CD8-positive, alpha-beta memory T cell (primary cell): ENCODE measurements at regions of chr13 and their contacts with region 1.

Region 1: DNA sequence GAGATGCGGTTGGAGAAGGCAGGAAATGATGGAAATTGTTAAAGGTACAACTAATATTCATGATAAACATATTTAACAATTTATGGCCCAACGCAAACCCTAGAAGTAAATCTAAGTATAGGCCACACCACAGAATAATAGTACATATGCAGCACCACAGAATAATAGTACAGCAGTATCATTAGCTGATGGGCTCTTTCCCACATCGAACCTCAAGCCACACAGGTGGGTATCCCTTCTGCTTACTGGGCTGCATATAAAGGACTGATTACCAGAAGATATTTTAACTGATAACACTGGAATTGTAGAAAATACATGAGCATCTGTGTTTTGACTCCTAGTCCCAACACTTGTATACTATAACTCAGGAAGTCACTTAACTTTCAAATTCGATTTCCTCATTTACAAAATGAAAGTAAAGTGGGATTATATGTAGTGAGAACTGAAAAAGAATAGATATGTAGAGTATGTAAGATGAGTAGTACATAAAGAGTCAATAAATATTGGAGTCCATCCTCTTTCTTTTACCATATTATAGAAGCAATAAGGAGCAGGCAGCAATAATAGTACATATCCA is 91.5 kb downstream of the TSC22D1 start:
- DNase-seq: no peak
- H3K4me3 ChIP-seq: peak overlapping the region; percentile 2
- H3K4me3 Mint-ChIP-seq: peak overlapping the region; percentile 11 to 69 (median 46)
- H3K27ac ChIP-seq: no peak overlapping the region
- H3K27ac Mint-ChIP-seq: peak overlapping the region in 7 of 8 donors; percentile 20 to 80 (median 61)
- H3K4me1 ChIP-seq: peaks cover 13% of the 10 kb centered on the region
- H3K4me1 Mint-ChIP-seq: peaks cover 18 to 24% (median 20%) of the 10 kb centered on the region in 3 donors
- H3K27me3 ChIP-seq: no peaks in the 10 kb centered on the region
- H3K27me3 Mint-ChIP-seq: no peaks in the 10 kb centered on the region

Region 2: DNA sequence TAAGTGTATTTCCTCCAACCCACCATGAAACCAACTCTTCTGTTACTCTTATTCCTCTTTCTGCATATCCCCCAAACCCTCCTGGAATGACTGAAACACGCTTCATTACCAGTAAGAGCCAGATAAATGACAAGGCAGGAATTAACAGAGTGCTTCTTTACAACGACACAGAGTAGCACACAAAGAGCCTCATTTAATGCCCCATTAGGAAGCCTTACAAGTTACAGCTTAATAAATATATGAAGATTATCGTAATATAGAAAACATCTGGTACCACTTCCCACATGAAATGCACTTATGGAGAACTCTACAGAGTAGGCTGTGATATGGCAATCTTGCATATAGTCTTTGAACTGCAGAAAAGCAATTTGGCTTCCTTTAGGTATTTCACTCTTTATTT is 814.7 kb before region 1 on chr13:
- CTCF ChIA-PET with region 1: no interaction called
- POLR2A ChIA-PET with region 1: no interaction called
- DNase-seq: no peak
- H3K4me3 ChIP-seq: no peak overlapping the region
- H3K4me3 Mint-ChIP-seq: no peak overlapping the region
- H3K27ac ChIP-seq: no peak overlapping the region
- H3K27ac Mint-ChIP-seq: no peak overlapping the region
- H3K4me1 ChIP-seq: no peaks in the 10 kb centered on the region
- H3K4me1 Mint-ChIP-seq: peaks cover 1 to 4% (median 4%) of the 10 kb centered on the region in 3 donors
- H3K27me3 ChIP-seq: peaks cover 4% of the 10 kb centered on the region
- H3K27me3 Mint-ChIP-seq: peaks cover 6 to 11% of the 10 kb centered on the region in 2 donors

Region 3: GRCh38 chr13:44648392-44649103 is 163.9 kb after region 1 on chr13:
- CTCF ChIA-PET with region 1: interaction called, 12 read pairs
- POLR2A ChIA-PET with region 1: no interaction called
- DNase-seq: no peak
- H3K4me3 ChIP-seq: no peak overlapping the region
- H3K4me3 Mint-ChIP-seq: peak overlapping the region in 1 of 7 donors; percentile 48
- H3K27ac ChIP-seq: no peak overlapping the region
- H3K27ac Mint-ChIP-seq: peak overlapping the region in 1 of 8 donors; percentile 36
- H3K4me1 ChIP-seq: no peaks in the 10 kb centered on the region
- H3K4me1 Mint-ChIP-seq: no peaks in the 10 kb centered on the region
- H3K27me3 ChIP-seq: no peaks in the 10 kb centered on the region
- H3K27me3 Mint-ChIP-seq: peaks cover 9 to 28% of the 10 kb centered on the region in 2 donors

Region 4: GRCh38 chr13:44969551-44970484 is 485.2 kb after region 1 on chr13:
- CTCF ChIA-PET with region 1: interaction called, 15 read pairs
- POLR2A ChIA-PET with region 1: no interaction called
- DNase-seq: peak in 2 of 5 donors; percentile 15 to 17
- H3K4me3 ChIP-seq: no peak overlapping the region
- H3K4me3 Mint-ChIP-seq: no peak overlapping the region
- H3K27ac ChIP-seq: no peak overlapping the region
- H3K27ac Mint-ChIP-seq: no peak overlapping the region
- H3K4me1 ChIP-seq: no peaks in the 10 kb centered on the region
- H3K4me1 Mint-ChIP-seq: no peaks in the 10 kb centered on the region
- H3K27me3 ChIP-seq: no peaks in the 10 kb centered on the region
- H3K27me3 Mint-ChIP-seq: no peaks in the 10 kb centered on the region